Left ventricle myocardium inferior (tissue), 1 donor: ENCODE measurements at regions of chr1 and their contacts with region 1.

Region 1: GRCh38 chr1:37449936-37450335 is 24.4 kb upstream of the ZC3H12A start:
- DNase-seq: no peak
- H3K4me3 ChIP-seq: no peak overlapping the region
- H3K27ac ChIP-seq: no peak overlapping the region
- H3K4me1 ChIP-seq: peaks cover 4% of the 10 kb centered on the region
- H3K27me3 ChIP-seq: peaks cover 60% of the 10 kb centered on the region
- CTCF ChIP-seq: no peak

Region 2: GRCh38 chr1:37486680-37487618 is 37.0 kb after region 1 on chr1:
- intact Hi-C with region 1: loop called (anchors 2 kb)
- DNase-seq: peak; percentile 79
- H3K4me3 ChIP-seq: no peak overlapping the region
- H3K27ac ChIP-seq: peak overlapping the region; percentile 70
- H3K4me1 ChIP-seq: peaks cover 40% of the 10 kb centered on the region
- H3K27me3 ChIP-seq: no peaks in the 10 kb centered on the region
- CTCF ChIP-seq: peak; percentile 99

Region 3: GRCh38 chr1:37682334-37682987 is 232.5 kb after region 1 on chr1:
- intact Hi-C with region 1: loop called (anchors 10 kb)
- DNase-seq: peak; percentile 54
- H3K4me3 ChIP-seq: no peak overlapping the region
- H3K27ac ChIP-seq: no peak overlapping the region
- H3K4me1 ChIP-seq: no peaks in the 10 kb centered on the region
- H3K27me3 ChIP-seq: no peaks in the 10 kb centered on the region
- CTCF ChIP-seq: peak; percentile 86